ENCODE measurements at regions of chr12 and their contacts with region 1.

Region 1: GRCh38 chr12:57175428-57176138 is 28.2 kb upstream of the LRP1-AS start:
- DNase-seq: peak; percentile 67 to 90 (median 82)
- H3K4me3 ChIP-seq: no peak overlapping the region
- H3K27ac ChIP-seq: peak overlapping the region in 2 of 5 donors; percentile 8 to 21
- H3K4me1 ChIP-seq: no peaks in the 10 kb centered on the region
- H3K27me3 ChIP-seq: no peaks in the 10 kb centered on the region
- CTCF ChIP-seq: peak; percentile 55 to 79 (median 70)
- POLR2A ChIP-seq: no peak

Region 2: GRCh38 chr12:57124259-57124877 is 51.2 kb before region 1 on chr12:
- intact Hi-C with region 1: loop called in 1 of 2 experiments (anchors 2 kb)
- DNase-seq: peak; percentile 69 to 91 (median 81)
- H3K4me3 ChIP-seq: no peak overlapping the region
- H3K27ac ChIP-seq: no peak overlapping the region
- H3K4me1 ChIP-seq: peaks cover 4 to 14% of the 10 kb centered on the region in 2 donors
- H3K27me3 ChIP-seq: no peaks in the 10 kb centered on the region
- CTCF ChIP-seq: peak; percentile 93 to 97 (median 96)
- POLR2A ChIP-seq: no peak

Region 3: DNA sequence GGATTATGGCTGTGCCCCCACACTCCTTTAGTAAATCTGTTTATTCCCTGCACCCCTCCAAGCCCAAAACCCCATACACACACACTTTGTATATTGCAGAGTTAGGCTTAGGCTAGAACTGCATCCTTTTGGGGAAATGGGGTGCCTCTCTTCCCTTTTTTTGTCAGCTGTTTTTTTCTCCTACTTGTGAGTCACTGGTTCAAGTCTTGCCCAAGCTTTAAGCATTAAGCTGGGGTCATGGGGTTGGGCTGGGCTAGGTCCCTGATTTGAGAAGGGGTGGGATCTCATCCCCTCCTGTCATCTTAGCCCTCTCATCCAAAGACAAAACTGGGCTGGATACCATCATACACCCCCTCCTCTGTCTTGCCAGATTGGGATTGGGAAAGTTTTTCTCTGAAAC is 45.7 kb before region 1 on chr12:
- intact Hi-C with region 1: loop called (anchors 2 to 5 kb)
- DNase-seq: peak in 2 of 7 donors; percentile 51 to 64
- H3K4me3 ChIP-seq: peak overlapping the region in 1 of 4 donors; percentile 84
- H3K27ac ChIP-seq: peak overlapping the region in 4 of 5 donors; percentile 45 to 97 (median 78)
- H3K4me1 ChIP-seq: peaks cover 4 to 54% of the 10 kb centered on the region in 2 donors
- H3K27me3 ChIP-seq: no peaks in the 10 kb centered on the region
- CTCF ChIP-seq: no peak
- POLR2A ChIP-seq: no peak